ENCODE measurements at regions of chr15 and their contacts with region 1.

Region 1: GRCh38 chr15:89087830-89088604 is at the start of gene ABHD2:
- DNase-seq: peak; percentile 98
- ATAC-seq: peak; percentile 96
- H3K4me3 ChIP-seq: peak within 1 kb of the TSS; percentile 75 to 97 (median 93)
- H3K4me3 Mint-ChIP-seq: no peak within 1 kb of the TSS
- H3K27ac ChIP-seq: peak within 1 kb of the TSS; percentile 42 to 68
- H3K27ac Mint-ChIP-seq: no peak within 1 kb of the TSS
- H3K4me1 ChIP-seq: peaks cover 35 to 42% of the 10 kb centered on the region in 2 donors
- H3K4me1 Mint-ChIP-seq: peaks cover 30% of the 10 kb centered on the region
- H3K27me3 ChIP-seq: no peaks in the 10 kb centered on the region
- H3K27me3 Mint-ChIP-seq: no peaks in the 10 kb centered on the region
- CTCF ChIP-seq: no peak
- total RNA-seq, gene ABHD2: 40.9 and 45.8 TPM in 2 replicates

Region 2: DNA sequence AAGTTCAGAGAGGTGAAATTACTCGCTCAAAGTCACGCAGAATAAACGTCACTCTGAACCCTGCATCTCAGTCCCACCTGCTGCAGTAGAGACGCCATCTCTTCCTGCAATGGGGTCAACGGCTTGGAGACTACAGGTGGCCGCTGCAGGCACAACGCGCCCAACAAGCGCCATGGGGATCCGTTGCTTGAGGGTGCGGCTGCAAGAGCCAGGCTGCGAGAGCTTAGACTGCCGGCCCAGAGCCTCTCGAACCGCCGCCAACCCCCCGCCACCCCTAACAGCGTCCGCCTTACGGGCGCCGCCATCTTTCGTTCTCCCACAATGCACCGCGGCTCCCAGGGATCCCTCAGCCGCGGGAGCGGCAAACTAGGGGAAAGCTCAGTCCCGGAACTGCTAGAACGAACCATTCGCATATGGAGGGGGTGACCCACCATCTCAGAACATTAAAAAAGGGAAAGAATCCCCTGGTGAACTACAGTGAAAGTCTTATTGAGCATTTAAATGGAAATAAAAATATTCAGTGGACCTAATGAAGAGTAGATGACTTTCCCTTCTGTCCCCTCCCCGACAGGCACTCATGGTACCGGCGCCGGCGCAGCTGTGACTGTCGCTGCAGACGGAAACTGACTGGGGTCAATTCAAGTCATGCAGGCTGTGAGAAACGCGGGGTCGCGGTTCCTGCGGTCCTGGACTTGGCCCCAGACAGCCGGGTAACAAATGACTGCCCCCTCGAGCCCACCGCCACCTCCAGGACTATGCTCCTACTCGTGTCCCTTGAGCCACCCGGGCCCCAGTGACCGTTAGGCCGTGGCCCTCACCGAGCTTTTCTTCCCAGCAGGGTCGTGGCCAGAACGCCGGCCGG is 620.7 kb before region 1 on chr15 and contains the starts of genes MRPL46 and MRPS11:
- CTCF ChIA-PET with region 1: no interaction called
- POLR2A ChIA-PET with region 1: no interaction called
- intact Hi-C with region 1: loop called (anchors 2 kb)
- DNase-seq: peak; percentile 95
- ATAC-seq: peak; percentile 92
- H3K4me3 ChIP-seq: peak within 1 kb of the TSS; percentile 77 to 99 (median 87)
- H3K4me3 Mint-ChIP-seq: peak within 1 kb of the TSS; percentile 97
- H3K27ac ChIP-seq: peak within 1 kb of the TSS; percentile 67 to 96
- H3K27ac Mint-ChIP-seq: peak within 1 kb of the TSS; percentile 99
- H3K4me1 ChIP-seq: peaks cover 14 to 17% of the 10 kb centered on the region in 2 donors
- H3K4me1 Mint-ChIP-seq: peaks cover 26% of the 10 kb centered on the region
- H3K27me3 ChIP-seq: no peaks in the 10 kb centered on the region
- H3K27me3 Mint-ChIP-seq: no peaks in the 10 kb centered on the region
- CTCF ChIP-seq: no peak
- total RNA-seq, gene MRPL46: 22.6 and 24.6 TPM in 2 replicates
- total RNA-seq, gene MRPS11: 37.9 and 40.1 TPM in 2 replicates

Region 3: DNA sequence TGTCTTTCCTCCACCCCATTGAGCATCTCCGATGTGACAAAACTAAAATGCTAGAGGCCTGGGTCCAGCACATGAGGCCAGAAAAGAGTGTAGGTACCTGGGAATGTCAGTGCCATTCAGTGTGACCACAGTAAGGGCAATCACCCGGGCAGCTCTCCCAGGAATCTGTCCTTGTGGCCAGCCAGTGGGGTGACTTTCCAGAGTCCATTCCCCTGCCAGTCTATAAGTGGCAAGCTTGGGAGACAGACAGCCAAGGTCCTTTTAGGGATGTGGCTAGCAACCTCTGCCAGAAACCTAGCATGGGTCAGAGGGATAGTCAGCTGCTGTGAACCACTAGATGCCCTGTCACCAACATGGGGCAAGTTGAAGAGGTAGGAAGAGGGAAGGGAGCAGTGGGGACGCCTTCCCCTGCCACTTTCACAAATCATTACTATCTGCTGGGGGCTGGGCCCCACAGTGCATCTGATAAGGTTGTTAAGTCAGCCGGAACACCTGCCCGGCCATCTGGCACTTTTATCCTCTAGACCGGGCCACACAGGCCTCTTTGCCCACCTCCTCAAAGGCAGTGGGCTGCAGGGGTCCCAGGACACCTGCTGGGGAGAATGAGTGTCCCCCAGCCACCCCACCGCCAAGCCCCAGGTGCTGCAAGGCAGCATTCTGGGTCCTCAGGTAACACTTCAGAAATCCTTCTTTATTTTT is 516.7 kb before region 1 on chr15:
- CTCF ChIA-PET with region 1: no interaction called
- POLR2A ChIA-PET with region 1: no interaction called
- intact Hi-C with region 1: no loop called
- DNase-seq: no peak
- ATAC-seq: no peak
- H3K4me3 ChIP-seq: no peak overlapping the region
- H3K4me3 Mint-ChIP-seq: no peak overlapping the region
- H3K27ac ChIP-seq: no peak overlapping the region
- H3K27ac Mint-ChIP-seq: no peak overlapping the region
- H3K4me1 ChIP-seq: no peaks in the 10 kb centered on the region
- H3K4me1 Mint-ChIP-seq: no peaks in the 10 kb centered on the region
- H3K27me3 ChIP-seq: no peaks in the 10 kb centered on the region
- H3K27me3 Mint-ChIP-seq: peaks cover 16% of the 10 kb centered on the region
- CTCF ChIP-seq: no peak

Region 4: DNA sequence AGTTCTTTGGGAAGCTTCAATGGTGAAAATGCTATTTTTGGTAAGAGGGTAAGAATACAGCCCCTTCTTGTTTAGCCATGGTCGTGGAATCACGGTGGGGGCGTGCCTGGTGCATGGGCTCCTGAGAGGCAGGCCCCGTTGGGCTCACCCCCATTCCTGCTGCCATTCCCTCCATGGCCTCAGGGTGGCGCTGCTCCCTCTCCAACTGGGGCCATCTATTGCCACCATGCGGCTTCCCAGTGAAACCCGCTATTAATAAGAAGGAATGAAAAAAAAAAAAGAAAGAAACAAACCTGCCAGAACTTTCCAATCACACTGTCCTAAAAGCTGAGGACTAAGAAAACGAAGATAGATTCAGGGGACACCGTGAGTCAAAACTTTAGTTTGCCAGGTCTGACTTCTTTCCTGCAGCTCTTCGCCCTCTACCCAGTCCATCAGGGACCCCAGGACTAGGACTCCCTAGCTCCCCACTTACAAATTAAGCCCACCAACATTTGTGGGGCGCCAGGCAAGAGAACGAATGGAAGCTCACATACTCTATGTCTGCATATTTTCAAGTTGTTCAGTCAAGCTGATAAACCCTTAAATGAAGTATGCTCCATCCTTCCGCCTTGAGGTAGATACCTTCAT is 30.4 kb before region 1 on chr15:
- CTCF ChIA-PET with region 1: interaction called, 12 read pairs
- POLR2A ChIA-PET with region 1: no interaction called
- intact Hi-C with region 1: no loop called
- DNase-seq: peak; percentile 74
- ATAC-seq: peak; percentile 91
- H3K4me3 ChIP-seq: no peak overlapping the region
- H3K4me3 Mint-ChIP-seq: no peak overlapping the region
- H3K27ac ChIP-seq: no peak overlapping the region
- H3K27ac Mint-ChIP-seq: no peak overlapping the region
- H3K4me1 ChIP-seq: no peaks in the 10 kb centered on the region
- H3K4me1 Mint-ChIP-seq: no peaks in the 10 kb centered on the region
- H3K27me3 ChIP-seq: peaks cover 0 to 8% (median 0%) of the 10 kb centered on the region in 4 experiments
- H3K27me3 Mint-ChIP-seq: peaks cover 14% of the 10 kb centered on the region
- CTCF ChIP-seq: peak; percentile 95

Measured in B cell (primary cell).